ENCODE measurements at regions of chr9 and their contacts with region 1.

Region 1: GRCh38 chr9:19464764-19465585 is 56.2 kb downstream of the ACER2 start:
- DNase-seq: peak; percentile 51 to 93
- H3K4me3 ChIP-seq: peak overlapping the region; percentile 44 to 73 (median 46)
- H3K27ac ChIP-seq: no peak overlapping the region
- H3K4me1 ChIP-seq: no peaks in the 10 kb centered on the region
- H3K27me3 ChIP-seq: peaks cover 0 to 2% (median 0%) of the 10 kb centered on the region in 4 experiments; a peak in 2 of 7 replicates
- CTCF ChIP-seq: peak; percentile 67 to 90 (median 87)
- EP300 ChIP-seq: no peak
- POLR2A ChIP-seq: peak in 1 of 2 experiments; percentile 54; a peak in 1 of 3 replicates
- RAD21 ChIP-seq: peak; percentile 29 to 52; a peak in 2 of 4 replicates

Region 2: DNA sequence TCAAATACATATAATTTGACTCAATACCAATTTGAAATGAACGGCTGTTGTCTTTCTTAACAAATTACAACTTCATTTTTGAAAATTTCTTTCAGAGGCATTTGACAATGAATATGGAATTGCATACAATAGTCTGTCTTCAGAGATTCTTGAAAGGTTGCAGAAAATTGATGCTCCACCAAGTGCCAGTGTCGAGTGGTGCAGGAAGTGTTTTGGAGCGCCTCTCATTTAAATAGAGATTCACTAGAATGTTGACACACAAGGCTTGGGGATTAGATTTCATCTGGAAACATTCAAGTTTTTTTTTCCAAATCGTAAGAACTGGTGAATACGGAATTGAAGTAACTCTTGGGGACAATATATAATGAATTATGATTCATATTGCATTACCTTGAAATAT is 93.0 kb before region 1 on chr9:
- CTCF ChIA-PET with region 1: interaction called, 5 read pairs
- POLR2A ChIA-PET with region 1: interaction called, 28 read pairs
- DNase-seq: no peak
- H3K4me3 ChIP-seq: no peak overlapping the region
- H3K27ac ChIP-seq: no peak overlapping the region
- H3K4me1 ChIP-seq: no peaks in the 10 kb centered on the region
- H3K27me3 ChIP-seq: no peaks in the 10 kb centered on the region
- CTCF ChIP-seq: peak in 1 of 3 experiments; percentile 14; a peak in 2 of 4 replicates
- EP300 ChIP-seq: no peak
- POLR2A ChIP-seq: no peak
- RAD21 ChIP-seq: no peak; a peak in 1 of 4 replicates

Region 3: DNA sequence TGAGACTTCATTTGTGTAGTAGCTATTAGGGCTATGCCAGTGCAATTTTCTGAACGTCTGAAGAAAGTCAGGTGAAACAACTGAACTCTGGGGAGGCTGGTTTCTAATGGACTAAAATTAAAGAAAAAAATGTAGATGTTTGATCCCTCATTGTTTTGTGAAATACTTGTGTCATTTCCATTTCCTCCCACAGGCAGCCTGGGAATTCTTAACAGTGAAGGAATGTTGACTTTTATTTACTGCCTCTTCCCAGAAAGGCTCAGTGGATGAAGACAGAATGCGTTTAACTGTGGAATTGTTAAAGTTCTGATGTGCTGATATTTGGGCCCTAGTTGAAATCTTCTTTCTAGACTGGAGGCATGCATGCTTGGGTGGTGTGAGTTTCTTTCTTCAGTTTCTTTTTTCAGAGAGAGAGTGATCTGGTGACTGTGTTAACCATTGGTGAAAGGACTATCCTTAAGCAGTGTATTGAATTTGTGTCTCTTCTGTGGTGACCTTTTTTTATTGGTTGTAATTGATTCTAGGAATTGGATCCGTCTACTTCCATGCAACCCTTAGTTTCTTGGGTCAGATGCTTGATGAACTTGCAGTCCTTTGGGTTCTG is 40.7 kb before region 1 on chr9:
- CTCF ChIA-PET with region 1: interaction called, 10 read pairs
- POLR2A ChIA-PET with region 1: no interaction called
- DNase-seq: no peak
- H3K4me3 ChIP-seq: no peak overlapping the region
- H3K27ac ChIP-seq: 0 out of 2 replicates have a peak overlapping the region, but pooled peaks have one; percentile 13
- H3K4me1 ChIP-seq: peaks cover 0 to 5% (median 2%) of the 10 kb centered on the region in 4 experiments; a peak in 4 of 7 replicates
- H3K27me3 ChIP-seq: no peaks in the 10 kb centered on the region
- CTCF ChIP-seq: no peak
- EP300 ChIP-seq: no peak
- POLR2A ChIP-seq: no peak
- RAD21 ChIP-seq: no peak

Region 4: GRCh38 chr9:19441730-19442129 is 23.2 kb before region 1 on chr9:
- CTCF ChIA-PET with region 1: interaction called, 12 read pairs
- POLR2A ChIA-PET with region 1: interaction called, 10 read pairs
- DNase-seq: no peak
- H3K4me3 ChIP-seq: no peak overlapping the region
- H3K27ac ChIP-seq: no peak overlapping the region
- H3K4me1 ChIP-seq: peaks cover 12 to 20% (median 18%) of the 10 kb centered on the region in 4 experiments
- H3K27me3 ChIP-seq: no peaks in the 10 kb centered on the region
- CTCF ChIP-seq: no peak
- EP300 ChIP-seq: no peak
- POLR2A ChIP-seq: no peak
- RAD21 ChIP-seq: no peak

Region 5: GRCh38 chr9:19925817-19926503 is 461.0 kb after region 1 on chr9:
- CTCF ChIA-PET with region 1: interaction called, 13 read pairs
- POLR2A ChIA-PET with region 1: no interaction called
- DNase-seq: peak; percentile 70 to 89
- H3K4me3 ChIP-seq: peak overlapping the region in 3 of 4 experiments; percentile 11 to 47 (median 17); a peak in 4 of 8 replicates
- H3K27ac ChIP-seq: no peak overlapping the region
- H3K4me1 ChIP-seq: peaks cover 0 to 8% (median 4%) of the 10 kb centered on the region in 4 experiments; a peak in 3 of 7 replicates
- H3K27me3 ChIP-seq: peaks cover 0 to 4% (median under 1%) of the 10 kb centered on the region in 4 experiments; a peak in 2 of 7 replicates
- CTCF ChIP-seq: peak; percentile 92 to 99 (median 92)
- EP300 ChIP-seq: no peak
- POLR2A ChIP-seq: no peak
- RAD21 ChIP-seq: peak; percentile 99

Measured in H1 (cell line).